ENCODE measurements at regions of chr2 and their contacts with region 1.

Region 1: DNA sequence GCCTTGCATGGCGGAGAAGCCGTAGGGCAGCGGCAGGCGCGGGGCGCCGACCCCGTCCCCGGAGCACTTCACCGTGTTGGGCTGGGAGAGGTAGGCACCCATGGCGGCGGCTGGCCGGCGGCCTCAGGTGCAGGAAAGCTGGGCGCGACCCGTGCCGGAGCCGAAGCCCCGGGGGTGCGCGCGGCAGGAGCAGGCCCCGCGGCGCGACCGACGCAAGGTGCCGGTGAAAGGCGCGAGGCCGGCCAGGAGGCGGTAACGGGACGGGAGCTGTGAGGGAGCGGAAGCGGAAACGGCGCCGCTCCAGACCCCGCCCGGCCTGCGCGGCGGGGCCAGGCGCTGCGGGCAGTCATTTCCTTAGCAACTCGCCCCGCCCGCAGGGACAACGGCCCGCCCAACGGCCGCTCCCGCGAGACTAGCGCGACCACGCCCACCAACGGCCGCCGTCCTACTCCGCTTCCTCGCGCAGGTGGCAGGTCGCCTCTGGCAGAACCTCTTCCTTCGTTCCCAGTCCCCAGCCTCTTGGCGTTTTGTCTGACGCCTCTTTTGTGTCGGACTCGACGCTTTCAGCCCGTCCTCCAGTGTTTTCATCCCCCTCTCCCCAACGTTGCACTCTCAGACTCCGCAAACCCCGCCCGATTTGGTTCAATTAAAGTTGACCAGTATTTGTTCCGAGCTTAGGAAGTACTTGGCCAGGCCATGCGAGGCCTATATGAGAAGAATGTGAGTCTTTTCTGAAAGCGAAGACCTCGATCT is at the start of gene PPM1G:
- DNase-seq: peak; percentile 98
- ATAC-seq: peak; percentile 97
- H3K4me3 Mint-ChIP-seq: peak within 1 kb of the TSS; percentile 90
- H3K27ac Mint-ChIP-seq: peak within 1 kb of the TSS; percentile 85
- H3K4me1 Mint-ChIP-seq: peaks cover 26% of the 10 kb centered on the region
- H3K27me3 Mint-ChIP-seq: peaks cover 7% of the 10 kb centered on the region
- total RNA-seq, gene PPM1G: 90.1 to 91.3 TPM

Region 2: GRCh38 chr2:27312152-27312551 is 97.3 kb before region 1 on chr2:
- POLR2A ChIA-PET with region 1: no interaction called
- DNase-seq: no peak
- ATAC-seq: no peak
- H3K4me3 Mint-ChIP-seq: no peak overlapping the region
- H3K27ac Mint-ChIP-seq: no peak overlapping the region
- H3K4me1 Mint-ChIP-seq: peaks cover 1% of the 10 kb centered on the region
- H3K27me3 Mint-ChIP-seq: peaks cover 2% of the 10 kb centered on the region

Region 3: GRCh38 chr2:27356382-27357181 is 52.9 kb before region 1 on chr2 and contains the start of gene GTF3C2:
- POLR2A ChIA-PET with region 1: interaction called, 10 read pairs
- DNase-seq: peak; percentile 88
- ATAC-seq: peak; percentile 80
- H3K4me3 Mint-ChIP-seq: peak within 1 kb of the TSS; percentile 97
- H3K27ac Mint-ChIP-seq: peak within 1 kb of the TSS; percentile 99
- H3K4me1 Mint-ChIP-seq: peaks cover 34% of the 10 kb centered on the region
- H3K27me3 Mint-ChIP-seq: no peaks in the 10 kb centered on the region
- total RNA-seq, gene GTF3C2: 66.4 to 70.8 TPM

Region 4: DNA sequence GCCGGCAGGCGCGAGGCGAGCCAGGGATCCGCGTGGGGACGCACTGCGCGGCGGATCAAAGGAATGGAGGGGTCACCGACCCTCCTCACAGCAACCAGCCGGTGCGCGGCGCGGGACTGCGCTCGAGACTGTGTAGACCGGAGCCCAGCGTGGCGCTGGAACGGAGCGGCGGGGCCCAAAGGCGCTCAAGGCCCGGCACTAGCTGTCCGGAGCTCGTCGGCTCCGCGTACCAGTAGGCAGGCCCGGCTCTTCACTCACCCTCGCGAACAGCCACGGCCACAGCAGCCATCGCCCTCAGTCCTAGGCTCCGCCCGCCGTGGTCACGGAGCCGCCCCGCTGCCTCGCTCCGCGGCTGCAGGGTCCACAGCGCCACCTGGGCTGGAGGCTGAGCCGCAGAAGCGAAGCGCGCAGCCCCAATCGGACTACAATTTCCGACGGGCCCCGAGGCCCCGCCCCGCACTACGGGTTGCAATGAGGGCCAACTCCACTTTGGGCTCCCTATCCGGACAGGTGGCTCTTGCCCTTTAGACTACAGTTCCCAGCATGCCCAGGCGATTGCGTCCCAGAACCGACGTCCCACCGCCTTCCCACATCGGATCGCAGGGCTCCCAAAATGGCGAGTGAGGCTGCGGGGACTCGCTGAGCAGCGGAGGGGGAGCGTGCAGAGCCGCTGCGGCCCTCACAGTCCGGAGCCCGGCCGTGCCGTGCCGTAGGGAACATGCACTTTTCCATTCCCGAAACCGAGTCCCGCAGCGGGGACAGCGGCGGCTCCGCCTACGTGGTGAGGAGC is 39.3 kb before region 1 on chr2 and contains the starts of genes EIF2B4 and SNX17:
- POLR2A ChIA-PET with region 1: interaction called, 30 read pairs
- DNase-seq: peak; percentile 98
- ATAC-seq: peak; percentile 93
- H3K4me3 Mint-ChIP-seq: peak within 1 kb of the TSS; percentile 100
- H3K27ac Mint-ChIP-seq: peak within 1 kb of the TSS; percentile 98
- H3K4me1 Mint-ChIP-seq: peaks cover 35% of the 10 kb centered on the region
- H3K27me3 Mint-ChIP-seq: no peaks in the 10 kb centered on the region
- total RNA-seq, gene EIF2B4: 38.3 to 39.2 TPM
- total RNA-seq, gene SNX17: 113 to 116 TPM

Region 5: GRCh38 chr2:27380626-27381545 is 28.6 kb before region 1 on chr2 and contains the start of gene ZNF513:
- POLR2A ChIA-PET with region 1: interaction called, 22 read pairs
- DNase-seq: peak; percentile 90
- ATAC-seq: peak; percentile 89
- H3K4me3 Mint-ChIP-seq: peak within 1 kb of the TSS; percentile 79
- H3K27ac Mint-ChIP-seq: peak within 1 kb of the TSS; percentile 87
- H3K4me1 Mint-ChIP-seq: peaks cover 16% of the 10 kb centered on the region
- H3K27me3 Mint-ChIP-seq: no peaks in the 10 kb centered on the region
- total RNA-seq, gene ZNF513: 16.4 to 18.6 TPM

Region 6: GRCh38 chr2:27428213-27428977 is 18.9 kb after region 1 on chr2 and contains the start of gene NRBP1:
- POLR2A ChIA-PET with region 1: interaction called, 91 read pairs
- DNase-seq: peak; percentile 98
- ATAC-seq: peak; percentile 88
- H3K4me3 Mint-ChIP-seq: peak within 1 kb of the TSS; percentile 99
- H3K27ac Mint-ChIP-seq: peak within 1 kb of the TSS; percentile 99
- H3K4me1 Mint-ChIP-seq: peaks cover 19% of the 10 kb centered on the region
- H3K27me3 Mint-ChIP-seq: peaks cover 2% of the 10 kb centered on the region
- total RNA-seq, gene NRBP1: 92.2 to 92.5 TPM

Region 7: GRCh38 chr2:27461118-27461517 is 51.6 kb after region 1 on chr2:
- POLR2A ChIA-PET with region 1: no interaction called
- DNase-seq: no peak
- ATAC-seq: no peak
- H3K4me3 Mint-ChIP-seq: no peak overlapping the region
- H3K27ac Mint-ChIP-seq: no peak overlapping the region
- H3K4me1 Mint-ChIP-seq: no peaks in the 10 kb centered on the region
- H3K27me3 Mint-ChIP-seq: no peaks in the 10 kb centered on the region

Region 8: GRCh38 chr2:27628767-27629709 is 219.5 kb after region 1 on chr2 and contains the starts of genes CCDC121 and GPN1:
- POLR2A ChIA-PET with region 1: interaction called, 15 read pairs
- DNase-seq: peak; percentile 92
- ATAC-seq: peak; percentile 98
- H3K4me3 Mint-ChIP-seq: no peak within 1 kb of the TSS
- H3K27ac Mint-ChIP-seq: no peak within 1 kb of the TSS
- H3K4me1 Mint-ChIP-seq: peaks cover 18% of the 10 kb centered on the region
- H3K27me3 Mint-ChIP-seq: no peaks in the 10 kb centered on the region
- total RNA-seq, gene CCDC121: 1.1 to 1.6 TPM
- total RNA-seq, gene GPN1: 32.7 to 37.4 TPM

Region 9: GRCh38 chr2:27663463-27664249 is 254.2 kb after region 1 on chr2 and contains the starts of genes SLC4A1AP and SUPT7L:
- POLR2A ChIA-PET with region 1: interaction called, 11 read pairs
- DNase-seq: peak; percentile 82
- ATAC-seq: peak; percentile 74
- H3K4me3 Mint-ChIP-seq: peak within 1 kb of the TSS; percentile 99
- H3K27ac Mint-ChIP-seq: peak within 1 kb of the TSS; percentile 100
- H3K4me1 Mint-ChIP-seq: peaks cover 34% of the 10 kb centered on the region
- H3K27me3 Mint-ChIP-seq: no peaks in the 10 kb centered on the region
- total RNA-seq, gene SLC4A1AP: 25.1 to 27.4 TPM
- total RNA-seq, gene SUPT7L: 42.8 to 43.4 TPM

Region 10: DNA sequence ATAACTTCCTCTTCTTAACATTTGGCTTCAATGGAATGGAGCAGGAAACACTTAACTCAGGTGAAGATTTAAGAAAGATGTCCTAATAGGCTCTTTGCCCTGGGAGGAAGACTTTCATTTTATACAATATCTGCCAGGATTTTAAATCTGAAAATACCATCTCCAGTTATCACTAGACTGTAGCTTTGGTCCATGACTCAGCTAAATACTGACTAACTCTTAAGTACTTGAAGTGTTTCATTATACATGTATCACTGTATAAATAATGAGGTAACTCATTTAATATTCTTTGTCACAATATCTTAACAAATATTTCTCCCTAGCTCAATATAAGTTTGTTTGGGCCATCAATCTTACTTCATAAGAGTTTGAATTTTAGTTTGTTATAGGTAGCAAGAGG is 446.0 kb after region 1 on chr2:
- POLR2A ChIA-PET with region 1: no interaction called
- DNase-seq: no peak
- ATAC-seq: no peak
- H3K4me3 Mint-ChIP-seq: no peak overlapping the region
- H3K27ac Mint-ChIP-seq: no peak overlapping the region
- H3K4me1 Mint-ChIP-seq: peaks cover 4% of the 10 kb centered on the region
- H3K27me3 Mint-ChIP-seq: peaks cover 2% of the 10 kb centered on the region

Measured in activated naive CD8-positive, alpha-beta T cell treated with anti-CD3 and anti-CD28 coated beads, Interleukin-2, amount 10 ng/mL, durations not matched to agents 7 days and 5 days (primary cell).